A673 (cell line): ENCODE measurements at regions of chr2 and their contacts with region 1.

Region 1: GRCh38 chr2:234841321-234842015 is 110.3 kb upstream of the SH3BP4 start:
- DNase-seq: no peak
- H3K4me3 ChIP-seq: no peak overlapping the region
- H3K27ac ChIP-seq: no peak overlapping the region
- H3K4me1 ChIP-seq: peaks cover 25% of the 10 kb centered on the region
- H3K27me3 ChIP-seq: no peaks in the 10 kb centered on the region
- CTCF ChIP-seq: no peak

Region 2: GRCh38 chr2:233928594-233929351 is 912.7 kb before region 1 on chr2:
- CTCF ChIA-PET with region 1: interaction called, 16 read pairs
- POLR2A ChIA-PET with region 1: no interaction called
- intact Hi-C with region 1: no loop called
- DNase-seq: peak; percentile 62
- H3K4me3 ChIP-seq: no peak overlapping the region
- H3K27ac ChIP-seq: no peak overlapping the region
- H3K4me1 ChIP-seq: peaks cover 12% of the 10 kb centered on the region
- H3K27me3 ChIP-seq: no peaks in the 10 kb centered on the region
- CTCF ChIP-seq: peak; percentile 88

Region 3: DNA sequence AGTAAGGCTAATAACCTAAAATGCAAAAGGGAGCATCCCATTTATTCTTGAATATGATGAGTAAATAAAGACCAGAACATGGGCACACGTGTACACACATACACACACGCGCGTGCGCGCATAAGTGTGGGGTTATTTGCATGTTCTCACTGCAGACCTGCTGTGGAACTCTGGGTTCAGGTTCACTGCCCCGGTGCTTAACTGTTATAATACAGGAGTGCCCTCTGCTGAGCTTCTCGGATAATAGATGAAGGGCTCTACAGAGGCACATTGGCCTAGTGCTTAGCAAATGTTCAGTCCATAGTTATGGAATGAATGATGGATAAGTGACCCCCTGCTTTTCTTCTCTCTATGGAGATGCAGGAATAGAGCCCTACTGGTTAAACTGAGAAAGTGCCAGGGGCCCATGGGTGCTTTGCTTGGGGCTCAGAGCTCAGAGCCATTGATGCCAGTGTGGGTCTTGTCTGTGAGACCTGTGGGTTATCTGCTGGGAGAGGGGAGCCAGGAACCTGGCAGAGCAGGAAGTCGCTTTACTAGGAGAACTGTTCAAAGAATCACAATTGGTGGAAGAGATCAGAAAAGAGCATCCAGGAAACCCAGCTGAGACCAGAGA is 341.0 kb before region 1 on chr2:
- CTCF ChIA-PET with region 1: no interaction called
- POLR2A ChIA-PET with region 1: no interaction called
- intact Hi-C with region 1: no loop called
- DNase-seq: peak; percentile 57
- H3K4me3 ChIP-seq: no peak overlapping the region
- H3K27ac ChIP-seq: no peak overlapping the region
- H3K4me1 ChIP-seq: no peaks in the 10 kb centered on the region
- H3K27me3 ChIP-seq: no peaks in the 10 kb centered on the region
- CTCF ChIP-seq: peak; percentile 57